ENCODE measurements at regions of chr20 and their contacts with region 1.

Region 1: GRCh38 chr20:43731469-43731868 is 4.7 kb upstream of the GTSF1L start:
- DNase-seq: no peak
- ATAC-seq: no peak
- H3K4me3 Mint-ChIP-seq: no peak overlapping the region
- H3K27ac Mint-ChIP-seq: no peak overlapping the region
- H3K4me1 Mint-ChIP-seq: 0 out of 2 replicates have a peak, but pooled peaks cover 7% of the 10 kb centered on the region
- H3K27me3 Mint-ChIP-seq: no peaks in the 10 kb centered on the region
- CTCF ChIP-seq: no peak

Region 2: DNA sequence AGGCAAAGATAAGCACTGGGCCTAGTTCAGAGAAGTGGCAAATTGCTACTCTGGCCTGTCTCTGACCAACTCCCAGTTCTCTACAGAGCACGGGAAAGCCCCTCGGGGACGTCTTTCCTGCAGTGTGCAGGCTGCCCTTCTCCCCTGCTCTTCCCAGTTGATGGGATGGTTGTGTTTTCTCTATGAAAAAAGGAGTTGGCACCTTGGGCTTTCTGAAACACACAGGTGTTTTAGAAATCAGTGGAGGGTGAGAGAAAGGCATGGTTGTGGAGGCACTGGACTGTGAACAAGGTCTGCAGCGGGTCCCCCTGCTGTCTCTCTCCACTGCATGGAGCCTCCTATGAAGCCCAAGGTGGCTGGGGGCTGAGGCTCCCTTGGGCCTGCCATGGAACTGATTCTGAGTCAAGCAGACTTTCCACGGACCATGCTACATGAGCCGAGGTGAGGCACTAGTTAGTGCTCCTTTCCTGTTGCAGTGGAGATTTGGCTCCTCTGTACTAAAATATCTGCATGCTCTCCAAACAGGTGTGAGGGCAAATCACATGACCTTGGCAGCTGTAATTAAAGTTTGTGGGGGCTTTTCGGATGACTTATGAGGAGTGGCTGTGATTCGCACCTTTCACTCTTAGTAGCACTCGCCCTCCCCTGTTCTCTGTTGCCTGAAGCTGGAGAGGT is 21.0 kb before region 1 on chr20:
- CTCF ChIA-PET with region 1: no interaction called
- POLR2A ChIA-PET with region 1: no interaction called
- DNase-seq: no peak
- ATAC-seq: no peak
- H3K4me3 Mint-ChIP-seq: no peak overlapping the region
- H3K27ac Mint-ChIP-seq: no peak overlapping the region
- H3K4me1 Mint-ChIP-seq: no peaks in the 10 kb centered on the region
- H3K27me3 Mint-ChIP-seq: no peaks in the 10 kb centered on the region
- CTCF ChIP-seq: no peak

Region 3: DNA sequence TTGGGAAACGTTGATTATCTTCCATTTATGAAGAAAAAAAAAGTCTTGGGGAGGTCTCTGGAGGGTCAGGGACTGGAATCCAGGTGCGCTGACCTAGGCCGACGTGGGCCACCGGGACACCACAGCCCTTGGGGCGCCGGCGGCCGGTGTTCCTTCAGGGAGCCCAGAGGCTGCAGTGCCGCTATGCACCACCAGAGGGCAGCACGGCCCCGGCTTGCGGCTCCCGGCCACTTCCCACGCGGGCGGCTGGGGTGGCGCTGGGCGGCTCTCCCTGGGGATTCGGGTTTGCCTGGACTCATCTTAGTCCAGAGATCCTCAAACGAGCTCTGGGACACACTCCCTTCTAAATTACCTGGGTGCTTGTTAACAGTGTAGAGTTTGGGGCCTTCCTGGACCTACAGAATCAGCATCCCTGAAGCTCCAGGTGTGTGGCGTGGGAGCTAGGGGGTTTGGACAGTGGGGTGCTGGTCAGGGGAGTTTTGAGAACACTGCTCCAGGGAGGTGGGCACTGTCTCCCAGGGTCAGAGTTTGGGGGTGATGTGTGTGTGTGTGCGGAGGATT is 18.3 kb after region 1 on chr20:
- CTCF ChIA-PET with region 1: interaction called, 10 read pairs
- POLR2A ChIA-PET with region 1: no interaction called
- DNase-seq: peak; percentile 93
- ATAC-seq: peak; percentile 87
- H3K4me3 Mint-ChIP-seq: no peak overlapping the region
- H3K27ac Mint-ChIP-seq: no peak overlapping the region
- H3K4me1 Mint-ChIP-seq: peaks cover 8% of the 10 kb centered on the region
- H3K27me3 Mint-ChIP-seq: peaks cover 5% of the 10 kb centered on the region; the same call in 1 of the 2 replicates
- CTCF ChIP-seq: peak; percentile 100

Region 4: GRCh38 chr20:43994486-43995100 is 263.1 kb after region 1 on chr20:
- CTCF ChIA-PET with region 1: no interaction called
- POLR2A ChIA-PET with region 1: no interaction called
- DNase-seq: no peak
- ATAC-seq: no peak
- H3K4me3 Mint-ChIP-seq: no peak overlapping the region
- H3K27ac Mint-ChIP-seq: no peak overlapping the region; the same call in 1 of the 2 replicates
- H3K4me1 Mint-ChIP-seq: no peaks in the 10 kb centered on the region
- H3K27me3 Mint-ChIP-seq: no peaks in the 10 kb centered on the region
- CTCF ChIP-seq: no peak